ENCODE measurements at regions of chr5 and their contacts with region 1.

Region 1: DNA sequence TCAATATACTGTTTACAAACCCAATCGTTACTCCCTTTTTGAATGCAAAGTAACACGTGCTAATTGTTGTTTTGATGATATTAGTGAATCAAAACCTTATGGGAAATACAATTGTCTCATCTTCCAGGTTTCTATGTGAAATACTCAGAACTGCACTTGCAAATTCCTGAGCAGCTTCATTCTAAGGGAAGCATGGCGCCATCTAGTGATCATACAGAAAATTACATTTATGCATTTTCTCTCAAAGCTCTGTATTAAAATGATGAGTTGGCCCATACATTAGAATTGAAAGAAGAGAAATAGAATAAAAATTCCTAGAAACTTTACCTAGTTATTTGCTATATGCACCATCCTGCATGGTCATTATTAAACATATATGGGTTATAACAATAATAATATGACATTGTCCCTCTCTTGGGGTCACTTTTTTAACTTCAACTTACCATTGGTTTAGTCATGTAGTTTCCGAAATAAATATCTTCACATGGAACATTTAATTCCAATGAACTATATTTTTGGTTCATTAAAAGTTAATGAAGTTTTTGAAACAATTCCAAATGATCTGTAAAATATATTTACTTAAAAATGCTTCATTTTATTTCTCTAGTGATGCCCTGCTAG is 220.0 kb downstream of the PDE4D start:
- DNase-seq: no peak
- H3K4me3 ChIP-seq: no peak overlapping the region
- H3K27ac ChIP-seq: no peak overlapping the region
- H3K4me1 ChIP-seq: no peaks in the 10 kb centered on the region
- H3K27me3 ChIP-seq: no peaks in the 10 kb centered on the region
- CTCF ChIP-seq: peak; percentile 79

Region 2: GRCh38 chr5:58922461-58923171 is 750.9 kb before region 1 on chr5:
- intact Hi-C with region 1: no loop called
- DNase-seq: peak; percentile 69
- H3K4me3 ChIP-seq: no peak overlapping the region
- H3K27ac ChIP-seq: peak overlapping the region; percentile 49
- H3K4me1 ChIP-seq: no peaks in the 10 kb centered on the region
- H3K27me3 ChIP-seq: no peaks in the 10 kb centered on the region
- CTCF ChIP-seq: no peak

Region 3: DNA sequence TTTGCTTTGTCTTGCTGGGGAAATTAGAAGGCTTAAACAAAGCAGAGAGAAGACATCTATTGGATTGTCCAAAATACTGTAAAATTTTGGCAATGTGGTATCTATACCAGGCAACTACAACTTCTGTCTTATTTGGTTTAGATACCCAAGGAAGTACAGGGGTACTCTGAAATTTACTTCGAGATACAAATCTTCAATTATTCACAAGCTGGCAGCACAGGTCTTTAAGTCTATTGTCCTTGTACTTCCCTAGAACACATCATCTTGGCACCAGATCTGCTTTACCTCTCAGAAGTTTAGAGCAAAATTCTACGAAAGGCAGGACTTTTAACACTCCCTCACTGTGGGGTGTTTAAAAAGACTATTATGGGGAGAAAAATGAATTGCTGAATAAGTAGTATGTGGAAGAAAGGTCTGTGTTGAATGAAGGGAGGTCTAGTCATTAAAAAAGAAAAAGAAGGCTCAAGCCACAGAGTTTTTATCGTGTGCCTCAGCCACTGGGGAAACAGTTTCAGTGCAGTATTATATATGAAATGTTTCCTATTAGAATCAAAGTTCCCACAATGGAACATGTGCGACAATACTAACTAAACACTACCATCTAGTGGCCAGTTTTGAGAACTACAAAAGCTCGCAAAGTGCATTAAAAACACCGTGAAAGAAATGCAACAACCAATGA is 126.3 kb after region 1 on chr5:
- intact Hi-C with region 1: loop called (anchors 10 kb)
- DNase-seq: peak; percentile 38
- H3K4me3 ChIP-seq: no peak overlapping the region
- H3K27ac ChIP-seq: peak overlapping the region; percentile 31
- H3K4me1 ChIP-seq: no peaks in the 10 kb centered on the region
- H3K27me3 ChIP-seq: no peaks in the 10 kb centered on the region
- CTCF ChIP-seq: peak; percentile 84

Measured in colonic mucosa (tissue), 4 donors.